Endothelial cell of umbilical vein (primary cell): ENCODE measurements at regions of chr3 and their contacts with region 1.

Region 1: DNA sequence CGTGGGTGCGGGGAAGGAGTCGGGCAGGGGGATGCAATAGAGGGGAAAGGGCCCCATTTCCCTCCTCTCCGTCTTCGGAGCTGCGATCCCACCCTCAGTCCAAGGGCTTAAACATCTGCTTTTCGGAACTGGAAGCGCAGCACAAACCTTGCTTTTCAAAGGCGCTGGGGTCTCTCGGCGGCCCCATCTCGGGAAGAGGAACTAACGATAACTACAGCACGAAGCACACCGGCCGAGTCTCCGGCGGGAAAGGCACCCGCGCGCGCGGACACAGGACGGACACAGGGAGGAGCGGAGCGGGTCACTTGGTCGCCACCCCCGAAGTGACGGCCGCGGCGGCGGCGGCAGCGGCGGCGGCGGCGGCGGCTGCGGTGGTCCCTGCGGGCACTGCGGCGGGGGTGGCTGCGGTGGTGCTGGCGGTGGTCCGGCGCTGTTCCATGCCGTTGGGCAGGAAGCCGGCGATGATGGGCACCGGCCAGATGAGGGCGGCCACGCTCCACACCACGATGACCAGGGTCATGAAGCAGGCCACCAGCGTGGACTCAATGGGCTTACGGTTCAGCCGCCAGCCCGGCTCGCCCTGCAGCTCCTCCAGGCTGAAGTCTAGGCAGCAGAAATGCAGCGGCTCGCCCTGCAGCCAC is 1.1 kb downstream of the TMEM158 start:
- DNase-seq: peak; percentile 64
- H3K4me3 ChIP-seq: peak overlapping the region; percentile 12 to 76 (median 45)
- H3K27ac ChIP-seq: no peak overlapping the region
- H3K4me1 ChIP-seq: peaks cover 10% of the 10 kb centered on the region
- H3K27me3 ChIP-seq: peaks cover 20 to 42% of the 10 kb centered on the region in 2 experiments
- CTCF ChIP-seq: peak; percentile 52 to 72
- POLR2A ChIP-seq: no peak

Region 2: DNA sequence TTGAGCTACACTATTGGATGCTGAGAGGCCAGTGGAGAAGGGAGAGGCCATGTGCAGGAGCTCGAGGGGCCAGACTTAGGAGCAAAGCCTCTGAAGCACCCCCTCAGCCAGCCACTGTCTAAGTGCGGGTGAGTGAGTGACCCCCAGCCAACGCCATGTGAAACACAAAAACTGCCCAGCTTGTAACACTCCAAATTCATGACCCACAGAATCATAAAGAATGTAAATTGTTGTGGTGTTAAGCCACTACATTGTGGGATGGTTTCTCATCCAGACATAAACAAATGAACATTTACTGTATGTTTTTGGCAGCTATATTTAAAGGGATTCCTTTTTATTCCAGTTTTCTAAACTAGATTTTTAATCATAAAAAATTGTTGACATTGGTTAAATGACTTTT is 28.4 kb after region 1 on chr3:
- CTCF ChIA-PET with region 1: no interaction called
- POLR2A ChIA-PET with region 1: no interaction called
- dilution Hi-C with region 1: no loop called
- intact Hi-C with region 1: no loop called
- DNase-seq: no peak
- H3K4me3 ChIP-seq: no peak overlapping the region
- H3K27ac ChIP-seq: no peak overlapping the region
- H3K4me1 ChIP-seq: no peaks in the 10 kb centered on the region
- H3K27me3 ChIP-seq: peaks cover 7 to 15% of the 10 kb centered on the region in 2 experiments
- CTCF ChIP-seq: no peak
- POLR2A ChIP-seq: no peak

Region 3: GRCh38 chr3:45499529-45499928 is 274.6 kb after region 1 on chr3:
- CTCF ChIA-PET with region 1: interaction called, 70 read pairs
- POLR2A ChIA-PET with region 1: no interaction called
- dilution Hi-C with region 1: no loop called
- intact Hi-C with region 1: loop called (anchors 1 kb)
- DNase-seq: peak; percentile 66
- H3K4me3 ChIP-seq: no peak overlapping the region
- H3K27ac ChIP-seq: no peak overlapping the region
- H3K4me1 ChIP-seq: peaks cover 5% of the 10 kb centered on the region
- H3K27me3 ChIP-seq: no peaks in the 10 kb centered on the region
- CTCF ChIP-seq: peak; percentile 10 to 22
- POLR2A ChIP-seq: no peak